Mammary epithelial cell (primary cell): ENCODE measurements at regions of chr4 and their contacts with region 1.

Region 1: DNA sequence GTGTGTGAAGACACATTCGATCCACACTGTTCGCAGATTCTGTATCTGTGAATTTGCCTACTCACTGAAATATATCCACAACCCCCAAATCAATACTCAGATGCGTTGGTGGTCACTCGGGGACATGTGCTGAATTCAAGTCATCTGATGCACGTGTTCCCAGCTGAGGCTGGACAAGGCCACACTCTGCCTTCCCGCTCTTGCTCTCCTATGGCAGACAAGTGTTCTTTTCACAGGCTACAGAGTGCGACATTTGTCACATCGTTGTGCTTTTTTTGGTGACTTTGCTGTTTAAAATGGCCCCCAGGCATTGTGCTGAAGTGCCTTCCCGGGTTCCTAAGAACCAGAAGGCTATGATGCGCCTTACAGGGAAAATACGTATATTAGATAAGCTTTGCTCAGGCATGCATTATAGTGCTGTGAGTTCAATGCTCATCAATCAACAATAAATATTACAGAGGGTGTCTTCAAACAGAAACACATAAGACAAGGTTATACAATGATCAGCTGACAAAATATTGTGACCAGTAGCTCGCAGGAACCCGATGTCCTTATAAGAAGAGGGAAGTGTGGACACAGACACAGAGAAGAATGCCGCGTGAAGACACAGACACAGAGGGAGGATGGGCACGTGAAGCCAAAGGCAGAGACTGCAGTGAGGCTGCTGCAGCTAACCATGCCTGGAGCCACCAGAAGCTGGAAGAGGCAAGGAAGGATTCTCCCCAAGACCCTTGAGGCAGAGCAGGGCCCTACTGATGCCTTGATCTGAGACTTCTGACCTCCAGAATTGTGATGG is 42.0 kb downstream of the IRF2 start:
- DNase-seq: no peak
- H3K4me3 ChIP-seq: no peak overlapping the region
- H3K27ac ChIP-seq: no peak overlapping the region
- H3K4me1 ChIP-seq: no peaks in the 10 kb centered on the region
- H3K27me3 ChIP-seq: no peaks in the 10 kb centered on the region
- CTCF ChIP-seq: no peak

Region 2: DNA sequence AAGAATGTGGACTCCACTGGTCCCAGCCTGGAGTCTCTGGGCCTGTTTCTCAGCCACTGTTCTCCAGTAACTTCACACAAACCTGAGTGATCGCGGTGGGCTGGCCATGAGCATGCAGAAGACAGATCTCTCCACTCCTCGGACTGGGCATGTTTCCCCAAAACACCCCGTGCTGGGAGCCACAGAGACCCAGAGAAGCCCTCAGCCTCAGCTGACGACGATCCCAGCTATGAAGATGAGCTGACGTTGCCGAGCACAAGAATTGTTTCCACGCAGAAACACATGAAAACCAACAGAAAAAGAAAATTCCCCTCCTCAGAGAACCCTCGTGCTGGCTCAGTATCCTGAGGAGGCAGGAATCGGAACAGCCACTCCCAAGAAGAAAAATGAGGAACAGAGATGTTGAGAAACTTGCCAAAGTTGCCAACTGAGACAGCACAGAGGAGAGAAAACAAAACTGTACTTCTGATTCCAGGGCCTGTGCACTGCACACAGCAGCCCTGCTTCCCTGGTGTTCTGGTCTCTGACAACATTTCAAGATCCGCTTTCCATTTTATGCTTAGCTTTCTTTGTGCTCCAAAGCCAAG is 39.5 kb before region 1 on chr4:
- CTCF ChIA-PET with region 1: no interaction called
- dilution Hi-C with region 1: loop called (anchors 5 kb)
- in situ Hi-C with region 1: no loop called
- intact Hi-C with region 1: no loop called
- DNase-seq: no peak
- H3K4me3 ChIP-seq: no peak overlapping the region
- H3K27ac ChIP-seq: no peak overlapping the region
- H3K4me1 ChIP-seq: no peaks in the 10 kb centered on the region
- H3K27me3 ChIP-seq: no peaks in the 10 kb centered on the region
- CTCF ChIP-seq: no peak